Heart left ventricle (tissue), 16 donors: ENCODE measurements at regions of chr15 and their contacts with region 1.

Region 1: DNA sequence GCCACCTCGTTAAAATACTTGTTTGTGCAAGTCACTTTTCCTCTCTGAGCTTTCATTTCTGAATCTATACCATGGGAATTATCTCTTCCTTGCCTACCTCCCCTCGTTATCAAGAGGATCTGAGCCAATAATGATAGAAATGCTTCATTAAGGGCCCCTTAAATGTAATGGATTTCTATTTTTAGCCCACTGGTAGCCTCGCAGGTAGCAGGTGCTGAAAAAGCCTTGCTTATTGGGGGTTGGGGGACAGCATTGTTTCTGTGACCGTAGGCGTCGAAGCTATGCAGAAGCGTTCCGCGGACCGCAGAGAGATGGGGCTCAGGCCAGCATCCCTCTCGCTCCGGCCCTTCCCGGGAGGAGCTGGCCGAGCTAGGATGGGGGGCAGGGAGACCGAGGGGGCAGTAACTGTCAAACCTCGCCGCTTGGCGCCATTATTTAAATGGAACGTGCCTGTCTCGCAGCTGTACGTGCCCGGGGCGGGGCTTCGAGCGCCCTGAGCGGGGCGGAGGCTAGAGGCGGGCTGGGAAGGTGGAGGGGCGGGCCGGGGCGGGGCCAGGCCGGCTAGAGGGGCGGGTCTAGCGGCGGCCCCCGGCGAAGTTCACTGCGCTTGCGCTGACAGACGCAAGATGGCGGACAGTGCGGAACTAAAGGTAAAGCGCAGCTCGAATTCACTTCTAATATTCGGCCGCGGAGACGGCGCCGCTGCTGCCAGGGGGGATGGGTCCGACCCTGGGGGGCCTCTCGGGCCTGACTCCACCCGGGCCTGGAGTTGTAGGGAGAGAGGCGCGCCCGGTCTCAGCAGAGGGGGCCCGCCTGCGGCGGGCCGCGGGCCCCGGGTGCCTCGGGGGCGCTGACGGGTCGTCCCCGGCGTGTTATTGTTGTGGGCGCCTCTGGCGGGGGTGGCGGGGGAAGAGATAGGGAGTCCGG is at the start of gene PIAS1:
- DNase-seq: peak; percentile 93 to 98 (median 97)
- ATAC-seq: peak; percentile 97 to 99 (median 98)
- H3K4me3 ChIP-seq: peak within 1 kb of the TSS; percentile 66 to 99 (median 96)
- H3K27ac ChIP-seq: peak within 1 kb of the TSS; percentile 39 to 96 (median 91)
- H3K4me1 ChIP-seq: peaks cover 0 to 40% (median 31%) of the 10 kb centered on the region in 12 donors
- H3K27me3 ChIP-seq: no peaks in the 10 kb centered on the region
- CTCF ChIP-seq: peak in 4 of 12 donors; percentile 16 to 28 (median 24)
- POLR2A ChIP-seq: peak; percentile 44 to 90
- total RNA-seq, gene PIAS1: 28.7 to 37.8 (median 30.1) TPM

Region 2: GRCh38 chr15:67884514-67885487 is 169.2 kb before region 1 on chr15:
- intact Hi-C with region 1: loop called in 1 of 10 experiments (anchors 5 kb)
- DNase-seq: peak; percentile 87 to 92 (median 90)
- ATAC-seq: peak; percentile 95 to 97 (median 96)
- H3K4me3 ChIP-seq: peak overlapping the region; percentile 22 to 66 (median 57)
- H3K27ac ChIP-seq: peak overlapping the region; percentile 64 to 86 (median 78)
- H3K4me1 ChIP-seq: peaks cover 0 to 53% (median 9%) of the 10 kb centered on the region in 12 donors
- H3K27me3 ChIP-seq: no peaks in the 10 kb centered on the region
- CTCF ChIP-seq: peak in 1 of 12 donors; percentile 10
- POLR2A ChIP-seq: peak in 1 of 2 donors; percentile 39

Region 3: GRCh38 chr15:68114356-68114755 is 60.4 kb after region 1 on chr15:
- intact Hi-C with region 1: loop called in 1 of 10 experiments (anchors 10 kb)
- DNase-seq: no peak
- ATAC-seq: peak in 2 of 4 donors; percentile 71
- H3K4me3 ChIP-seq: peak overlapping the region in 9 of 12 donors; percentile 29 to 53 (median 36)
- H3K27ac ChIP-seq: peak overlapping the region in 11 of 12 donors; percentile 18 to 84 (median 53)
- H3K4me1 ChIP-seq: peaks cover 0 to 51% (median 27%) of the 10 kb centered on the region in 12 donors
- H3K27me3 ChIP-seq: no peaks in the 10 kb centered on the region
- CTCF ChIP-seq: no peak
- POLR2A ChIP-seq: no peak

Region 4: GRCh38 chr15:68143129-68143528 is 89.2 kb after region 1 on chr15:
- intact Hi-C with region 1: loop called in 1 of 10 experiments (anchors 5 kb)
- DNase-seq: no peak
- ATAC-seq: no peak
- H3K4me3 ChIP-seq: no peak overlapping the region
- H3K27ac ChIP-seq: no peak overlapping the region
- H3K4me1 ChIP-seq: peaks cover 0 to 16% (median 0%) of the 10 kb centered on the region in 12 donors
- H3K27me3 ChIP-seq: no peaks in the 10 kb centered on the region
- CTCF ChIP-seq: no peak
- POLR2A ChIP-seq: no peak

Region 5: GRCh38 chr15:68277603-68278344 is 223.8 kb after region 1 on chr15 and contains the start of gene FEM1B:
- intact Hi-C with region 1: no loop called
- DNase-seq: peak; percentile 92 to 95 (median 93)
- ATAC-seq: peak; percentile 90 to 95 (median 94)
- H3K4me3 ChIP-seq: peak within 1 kb of the TSS; percentile 62 to 98 (median 82)
- H3K27ac ChIP-seq: peak within 1 kb of the TSS; percentile 93 to 100 (median 98)
- H3K4me1 ChIP-seq: peaks cover 6 to 77% (median 53%) of the 10 kb centered on the region in 12 donors
- H3K27me3 ChIP-seq: no peaks in the 10 kb centered on the region
- CTCF ChIP-seq: peak in 2 of 12 donors; percentile 12 to 13
- POLR2A ChIP-seq: peak in 1 of 2 donors; percentile 19
- total RNA-seq, gene FEM1B: 30.2 to 94.0 (median 61.2) TPM